ENCODE measurements at regions of chr4 and their contacts with region 1.

Region 1: GRCh38 chr4:29861307-29861706 is 858.9 kb upstream of the PCDH7 start:
- DNase-seq: no peak
- H3K4me3 ChIP-seq: no peak overlapping the region
- H3K27ac ChIP-seq: no peak overlapping the region
- H3K4me1 ChIP-seq: no peaks in the 10 kb centered on the region
- H3K27me3 ChIP-seq: no peaks in the 10 kb centered on the region
- CTCF ChIP-seq: no peak
- POLR2A ChIP-seq: no peak

Region 2: DNA sequence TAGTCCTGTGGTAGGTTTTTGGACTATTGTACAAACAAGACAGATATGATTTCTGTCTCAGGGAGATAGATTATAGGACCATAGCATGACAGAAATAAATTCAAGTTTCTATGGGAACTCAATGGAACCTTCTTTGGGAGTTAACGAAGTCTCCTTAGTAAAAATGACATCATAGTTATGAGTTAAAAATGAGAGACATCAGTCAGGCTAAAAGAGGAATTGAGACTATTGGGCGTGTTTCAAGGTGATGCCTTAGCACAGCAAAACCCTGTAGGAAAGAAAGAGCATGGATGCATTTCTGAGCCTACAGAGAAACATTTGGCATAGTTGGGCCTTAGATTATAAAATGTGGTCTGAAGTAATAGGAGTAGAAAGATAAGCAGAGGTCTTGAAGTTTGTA is 1050.3 kb before region 1 on chr4:
- intact Hi-C with region 1: loop called (anchors 5 kb)
- DNase-seq: no peak
- H3K4me3 ChIP-seq: no peak overlapping the region
- H3K27ac ChIP-seq: no peak overlapping the region
- H3K4me1 ChIP-seq: no peaks in the 10 kb centered on the region
- H3K27me3 ChIP-seq: no peaks in the 10 kb centered on the region
- CTCF ChIP-seq: no peak
- POLR2A ChIP-seq: no peak

Measured in breast epithelium (tissue), 4 donors.